H1 (cell line): ENCODE measurements at regions of chr11 and their contacts with region 1.

Region 1: GRCh38 chr11:75230621-75231020 is 10.0 kb upstream of the TPBGL start:
- DNase-seq: no peak
- H3K4me3 ChIP-seq: no peak overlapping the region
- H3K27ac ChIP-seq: no peak overlapping the region
- H3K4me1 ChIP-seq: no peaks in the 10 kb centered on the region; a peak in 2 of 7 replicates
- H3K27me3 ChIP-seq: no peaks in the 10 kb centered on the region
- CTCF ChIP-seq: no peak
- EP300 ChIP-seq: no peak
- POLR2A ChIP-seq: no peak
- RAD21 ChIP-seq: no peak

Region 2: DNA sequence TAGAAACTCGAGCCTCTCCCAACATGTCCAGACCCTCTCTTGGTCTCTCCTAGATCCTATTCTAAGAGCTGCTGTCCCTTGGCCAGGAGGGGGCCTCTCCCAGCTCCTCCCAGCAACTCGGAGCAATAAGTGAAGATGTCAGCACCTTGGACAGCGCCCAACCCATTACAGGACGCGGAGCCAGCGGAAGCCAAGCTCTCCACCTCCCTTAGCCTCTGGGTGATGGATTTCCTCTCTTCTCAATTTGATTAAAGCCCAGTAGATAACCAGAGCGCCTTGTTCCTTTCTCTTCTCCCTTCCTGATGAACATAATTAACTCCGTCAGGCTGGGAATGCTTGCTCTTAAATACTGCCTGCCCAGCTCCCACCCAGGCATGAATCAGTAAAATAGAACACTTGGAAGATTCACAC is 16.2 kb before region 1 on chr11:
- CTCF ChIA-PET with region 1: interaction called, 726 read pairs
- POLR2A ChIA-PET with region 1: no interaction called
- DNase-seq: peak; percentile 70 to 94
- H3K4me3 ChIP-seq: no peak overlapping the region
- H3K27ac ChIP-seq: no peak overlapping the region
- H3K4me1 ChIP-seq: no peaks in the 10 kb centered on the region
- H3K27me3 ChIP-seq: no peaks in the 10 kb centered on the region; a peak in 2 of 7 replicates
- CTCF ChIP-seq: peak; percentile 45 to 78 (median 70)
- EP300 ChIP-seq: no peak
- POLR2A ChIP-seq: no peak
- RAD21 ChIP-seq: peak; percentile 59 to 68